H1 (cell line): ENCODE measurements at regions of chr1 and their contacts with region 1.

Region 1: GRCh38 chr1:30322859-30323257 is 400.5 kb downstream of the MATN1 start:
- DNase-seq: peak in 1 of 2 experiments; percentile 58
- H3K4me3 ChIP-seq: no peak overlapping the region
- H3K27ac ChIP-seq: no peak overlapping the region
- H3K4me1 ChIP-seq: no peaks in the 10 kb centered on the region; a peak in 1 of 7 replicates
- H3K27me3 ChIP-seq: no peaks in the 10 kb centered on the region
- CTCF ChIP-seq: peak; percentile 40 to 69 (median 64)
- EP300 ChIP-seq: no peak
- POLR2A ChIP-seq: no peak
- RAD21 ChIP-seq: peak; percentile 22 to 48; a peak in 3 of 4 replicates

Region 2: DNA sequence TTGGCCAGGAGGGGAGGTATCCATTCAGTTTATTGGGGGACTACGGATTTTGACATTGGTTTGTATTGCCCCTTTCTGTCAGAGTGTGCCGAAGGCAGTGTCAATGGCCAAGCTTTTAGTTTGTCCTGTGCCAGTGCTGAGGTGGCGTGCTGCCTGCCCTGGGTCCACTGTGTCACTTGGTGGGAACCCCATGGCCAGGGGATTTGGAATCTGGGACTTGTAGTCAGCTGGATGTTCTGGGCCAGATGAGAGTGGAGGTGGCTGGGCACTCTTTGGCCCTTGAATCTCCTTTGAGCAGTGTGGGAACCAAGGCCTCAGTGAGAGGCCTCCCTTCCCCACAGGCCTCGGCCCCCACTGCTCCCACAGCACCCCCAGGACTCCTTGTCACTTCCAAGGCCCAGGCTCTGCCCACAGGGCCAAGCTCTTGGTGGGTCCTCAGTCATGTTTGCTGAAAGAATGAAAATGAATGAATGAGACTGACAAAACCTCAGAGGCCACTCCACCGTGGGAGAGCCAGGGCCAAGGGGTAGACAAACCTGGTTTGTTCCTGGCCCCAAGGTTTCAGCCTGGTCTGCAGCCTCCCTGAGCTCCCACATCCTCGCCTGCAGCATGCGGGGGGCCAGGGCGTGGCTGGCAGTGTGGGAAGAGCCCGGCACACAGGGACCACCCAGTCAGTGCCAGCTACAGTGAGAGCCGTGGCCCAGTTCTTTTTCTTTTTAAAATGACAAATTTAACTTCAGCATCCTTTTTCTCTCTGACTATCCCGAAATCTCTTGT is 11.7 kb before region 1 on chr1:
- CTCF ChIA-PET with region 1: interaction called, 20 read pairs
- POLR2A ChIA-PET with region 1: no interaction called
- DNase-seq: peak in 1 of 2 experiments; percentile 31
- H3K4me3 ChIP-seq: no peak overlapping the region
- H3K27ac ChIP-seq: no peak overlapping the region
- H3K4me1 ChIP-seq: peaks cover 0 to 3% (median 0%) of the 10 kb centered on the region in 4 experiments; a peak in 1 of 7 replicates
- H3K27me3 ChIP-seq: no peaks in the 10 kb centered on the region
- CTCF ChIP-seq: no peak
- EP300 ChIP-seq: no peak
- POLR2A ChIP-seq: no peak
- RAD21 ChIP-seq: no peak

Region 3: DNA sequence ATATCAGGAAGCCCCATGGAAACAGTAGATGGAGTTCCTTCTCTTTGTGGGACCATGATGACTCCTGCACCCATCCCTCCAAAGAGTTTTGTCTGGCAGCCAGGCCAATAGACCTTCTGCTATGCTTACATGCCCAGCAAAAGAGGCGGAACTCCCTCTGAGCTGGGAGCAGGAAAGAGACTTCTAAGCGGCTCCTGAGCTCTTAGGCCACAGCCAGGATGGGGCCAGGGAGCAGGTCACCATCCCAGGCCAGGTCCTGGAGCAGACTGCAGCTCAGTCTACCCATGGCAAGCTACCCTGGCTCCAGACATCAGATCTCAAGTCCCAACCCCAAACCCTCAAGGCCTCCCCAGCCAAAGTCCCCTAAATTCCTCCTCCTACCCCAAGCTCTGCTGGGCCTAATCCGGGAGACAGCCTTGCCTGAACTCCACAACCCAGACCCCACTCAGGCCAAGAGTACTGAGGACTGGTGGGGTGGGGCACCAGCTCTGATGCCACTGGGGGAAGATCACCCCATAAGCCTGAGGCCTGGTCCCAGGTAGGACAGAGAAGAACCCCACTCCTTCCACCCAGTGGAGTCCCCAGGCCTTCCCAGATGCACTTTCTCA is 12.6 kb after region 1 on chr1:
- CTCF ChIA-PET with region 1: interaction called, 10 read pairs
- POLR2A ChIA-PET with region 1: no interaction called
- DNase-seq: peak in 1 of 2 experiments; percentile 31
- H3K4me3 ChIP-seq: no peak overlapping the region
- H3K27ac ChIP-seq: no peak overlapping the region
- H3K4me1 ChIP-seq: no peaks in the 10 kb centered on the region
- H3K27me3 ChIP-seq: no peaks in the 10 kb centered on the region
- CTCF ChIP-seq: no peak
- EP300 ChIP-seq: no peak
- POLR2A ChIP-seq: no peak
- RAD21 ChIP-seq: no peak